ENCODE measurements at regions of chr2 and their contacts with region 1.

Region 1: DNA sequence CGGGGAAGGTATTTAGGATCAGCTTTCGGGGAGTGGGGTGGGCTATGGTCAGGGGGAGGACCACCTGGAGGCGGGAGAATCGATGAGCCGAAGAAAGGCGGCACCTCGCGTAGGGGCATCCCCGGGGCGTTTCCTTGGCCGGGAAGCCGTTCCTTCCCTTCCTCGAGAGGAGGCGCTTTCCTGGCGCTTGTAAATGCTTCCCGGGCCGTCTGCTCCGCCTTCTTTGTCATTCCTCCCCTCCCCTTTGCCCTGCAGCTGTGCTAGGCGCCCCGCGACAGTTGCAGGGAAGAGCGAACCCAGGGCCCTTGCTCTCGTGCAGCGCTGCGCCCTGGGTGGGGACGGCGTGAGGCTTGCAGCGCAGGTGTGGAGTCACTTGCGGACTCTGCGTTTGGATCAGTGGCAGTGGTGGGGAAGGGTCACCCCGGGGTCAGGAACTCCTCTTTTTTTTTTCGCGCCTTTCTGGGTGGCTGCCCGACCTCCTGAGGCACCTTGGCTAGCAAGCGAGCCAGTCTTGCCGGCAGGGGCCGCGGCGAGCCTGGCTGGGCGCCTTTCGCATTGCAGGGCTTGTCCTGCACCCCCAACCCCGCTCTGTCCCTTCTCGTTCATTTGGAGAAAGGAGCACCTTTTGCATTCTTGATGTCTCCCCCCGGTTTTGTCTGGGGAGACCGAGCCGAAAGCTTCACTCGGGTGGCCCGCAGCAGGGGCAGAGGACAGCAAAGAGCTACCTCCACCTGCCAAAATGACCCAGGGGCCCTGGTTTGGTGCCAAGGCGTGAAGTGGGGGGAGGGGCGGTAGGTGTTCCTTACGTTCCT is 840 bp downstream of the KCNS3 start:
- DNase-seq: peak; percentile 73 to 79
- ATAC-seq: peak; percentile 82 to 83
- H3K4me3 ChIP-seq: peak overlapping the region; percentile 82 to 98 (median 94)
- H3K27ac ChIP-seq: peak overlapping the region; percentile 83 to 98 (median 92)
- H3K4me1 ChIP-seq: peaks cover 20 to 30% of the 10 kb centered on the region in 2 donors
- H3K27me3 ChIP-seq: no peaks in the 10 kb centered on the region
- CTCF ChIP-seq: peak; percentile 7 to 58 (median 36)
- POLR2A ChIP-seq: no peak

Region 2: GRCh38 chr2:17753803-17754663 is 125.3 kb before region 1 on chr2 and contains the starts of genes GEN1 and SMC6:
- in situ Hi-C with region 1: no loop called
- intact Hi-C with region 1: loop called (anchors 5 kb)
- DNase-seq: peak; percentile 76 to 83
- ATAC-seq: peak; percentile 97
- H3K4me3 ChIP-seq: peak within 1 kb of the TSS; percentile 87 to 95 (median 90)
- H3K27ac ChIP-seq: peak within 1 kb of the TSS; percentile 97 to 99 (median 98)
- H3K4me1 ChIP-seq: peaks cover 29 to 31% of the 10 kb centered on the region in 2 donors
- H3K27me3 ChIP-seq: no peaks in the 10 kb centered on the region
- CTCF ChIP-seq: no peak
- POLR2A ChIP-seq: no peak
- total RNA-seq, gene GEN1: 0.31 to 8.7 (median 2.3) TPM
- total RNA-seq, gene SMC6: 7.5 to 11.0 (median 9.6) TPM

Region 3: GRCh38 chr2:17804358-17804757 is 74.9 kb before region 1 on chr2:
- in situ Hi-C with region 1: no loop called
- intact Hi-C with region 1: no loop called
- DNase-seq: no peak
- ATAC-seq: no peak
- H3K4me3 ChIP-seq: no peak overlapping the region
- H3K27ac ChIP-seq: no peak overlapping the region
- H3K4me1 ChIP-seq: peaks cover 0 to 7% of the 10 kb centered on the region in 2 donors
- H3K27me3 ChIP-seq: no peaks in the 10 kb centered on the region
- CTCF ChIP-seq: no peak
- POLR2A ChIP-seq: no peak